GM12878 (cell line): ENCODE measurements at regions of chr17 and their contacts with region 1.

Region 1: DNA sequence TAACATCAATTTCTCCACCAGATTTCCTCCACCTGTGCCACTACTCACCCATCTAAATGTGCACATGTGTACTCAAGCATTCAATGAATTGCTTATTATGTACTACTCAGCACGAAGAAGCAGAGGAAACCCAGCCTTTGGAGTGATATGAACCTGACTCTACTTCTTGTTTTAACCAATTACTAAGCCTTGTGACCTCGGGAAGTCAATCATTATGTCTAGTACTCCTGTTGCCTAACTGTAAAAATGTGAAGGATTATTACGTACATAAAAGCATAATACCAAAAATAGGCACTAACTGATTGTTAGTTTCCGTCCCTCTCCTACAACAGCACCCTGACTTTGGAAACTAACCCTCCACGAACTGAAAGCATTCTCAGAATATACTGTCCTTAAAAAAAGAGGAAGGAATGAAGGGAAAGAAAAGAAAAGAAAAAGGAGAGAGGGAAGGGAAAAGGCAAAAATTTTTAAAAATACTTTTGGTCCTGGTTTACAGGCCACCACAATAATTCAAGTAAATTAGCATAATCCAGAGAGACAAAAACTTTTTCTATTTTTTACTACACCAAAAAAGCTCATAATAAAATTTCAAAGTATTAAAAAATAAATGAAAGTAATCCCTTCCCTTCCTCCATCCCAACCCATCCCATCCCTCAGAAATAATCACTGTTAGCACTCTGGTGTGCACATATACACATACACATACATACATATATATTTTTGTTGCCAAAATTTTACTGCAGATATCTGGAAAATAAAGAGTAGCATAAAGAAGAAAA is 53.6 kb downstream of the KANSL1 start:
- DNase-seq: no peak
- ATAC-seq: peak; percentile 45
- H3K4me3 ChIP-seq: peak overlapping the region; percentile 41
- H3K27ac ChIP-seq: peak overlapping the region; percentile 36
- H3K4me1 ChIP-seq: peaks cover 81% of the 10 kb centered on the region
- H3K27me3 ChIP-seq: no peaks in the 10 kb centered on the region
- CTCF ChIP-seq: no peak
- EP300 ChIP-seq: no peak
- POLR2A ChIP-seq: no peak
- RAD21 ChIP-seq: no peak

Region 2: DNA sequence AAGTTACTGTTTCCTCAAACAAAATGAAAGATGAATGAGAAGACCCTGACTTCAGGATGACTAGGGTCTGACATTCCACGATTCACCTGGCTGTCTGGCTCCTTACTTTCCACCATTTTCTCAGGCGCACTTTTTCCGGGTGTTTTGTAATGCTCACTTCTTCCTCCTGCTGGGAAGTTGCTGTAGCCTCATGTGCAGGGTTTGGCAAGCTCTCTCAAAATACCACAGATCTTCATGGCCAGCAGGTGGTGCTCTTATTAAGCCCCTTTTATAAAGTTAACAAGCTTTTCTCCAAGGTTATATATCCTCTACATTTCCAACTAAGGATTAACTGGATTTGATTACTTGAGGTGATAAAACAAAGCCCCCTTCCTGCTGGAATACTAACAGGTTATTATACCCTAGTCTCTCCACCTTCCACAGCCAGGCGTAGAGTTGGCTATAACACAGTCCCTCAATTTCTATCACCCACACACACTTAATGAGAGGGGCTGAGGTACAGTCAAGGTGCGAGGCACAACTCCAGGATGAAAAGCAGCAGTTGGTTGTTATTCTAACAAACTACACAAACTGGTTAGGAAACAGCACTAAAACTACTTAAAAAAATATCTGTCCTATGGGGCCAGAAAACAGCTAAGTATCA is 95.2 kb before region 1 on chr17:
- CTCF ChIA-PET with region 1: interaction called, 18 read pairs
- POLR2A ChIA-PET with region 1: no interaction called
- RAD21 ChIA-PET with region 1: no interaction called
- SMC1A ChIA-PET with region 1: interaction called, 13 read pairs
- in situ Hi-C with region 1: no loop called
- intact Hi-C with region 1: no loop called
- DNase-seq: no peak
- ATAC-seq: peak; percentile 76
- H3K4me3 ChIP-seq: no peak overlapping the region
- H3K27ac ChIP-seq: no peak overlapping the region
- H3K4me1 ChIP-seq: no peaks in the 10 kb centered on the region
- H3K27me3 ChIP-seq: no peaks in the 10 kb centered on the region
- CTCF ChIP-seq: peak; percentile 67 to 80 (median 76)
- EP300 ChIP-seq: no peak
- POLR2A ChIP-seq: no peak
- RAD21 ChIP-seq: peak; percentile 75

Region 3: DNA sequence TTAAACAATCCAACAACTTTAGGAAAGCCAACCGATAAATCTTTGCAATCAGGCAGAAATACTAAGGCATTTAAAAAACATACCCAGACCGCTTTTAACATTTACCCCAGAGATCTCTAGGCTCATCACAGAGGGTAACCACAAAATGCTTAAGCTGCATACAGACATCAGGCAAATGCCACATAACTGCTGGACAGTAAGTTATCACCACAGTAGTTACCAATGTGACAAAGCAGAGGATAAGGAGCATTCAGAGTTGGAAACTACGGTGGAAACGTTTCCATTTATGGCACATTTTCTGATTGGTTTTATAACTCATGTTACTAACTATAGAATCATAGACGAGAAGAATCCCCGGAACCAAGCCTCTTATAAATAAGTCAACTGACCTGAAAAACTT is 23.9 kb before region 1 on chr17:
- CTCF ChIA-PET with region 1: interaction called, 15 read pairs
- POLR2A ChIA-PET with region 1: interaction called, 23 read pairs
- RAD21 ChIA-PET with region 1: interaction called, 33 read pairs
- SMC1A ChIA-PET with region 1: interaction called, 109 read pairs
- in situ Hi-C with region 1: no loop called
- intact Hi-C with region 1: no loop called
- DNase-seq: no peak
- ATAC-seq: no peak
- H3K4me3 ChIP-seq: no peak overlapping the region
- H3K27ac ChIP-seq: no peak overlapping the region
- H3K4me1 ChIP-seq: peaks cover 17% of the 10 kb centered on the region
- H3K27me3 ChIP-seq: no peaks in the 10 kb centered on the region
- CTCF ChIP-seq: no peak
- EP300 ChIP-seq: no peak
- POLR2A ChIP-seq: no peak
- RAD21 ChIP-seq: no peak

Region 4: GRCh38 chr17:46128453-46128852 is 11.2 kb before region 1 on chr17:
- CTCF ChIA-PET with region 1: interaction called, 9 read pairs
- POLR2A ChIA-PET with region 1: interaction called, 14 read pairs
- RAD21 ChIA-PET with region 1: interaction called, 16 read pairs
- SMC1A ChIA-PET with region 1: interaction called, 109 read pairs
- in situ Hi-C with region 1: no loop called
- intact Hi-C with region 1: no loop called
- DNase-seq: no peak
- ATAC-seq: no peak
- H3K4me3 ChIP-seq: no peak overlapping the region
- H3K27ac ChIP-seq: no peak overlapping the region
- H3K4me1 ChIP-seq: peaks cover 18% of the 10 kb centered on the region
- H3K27me3 ChIP-seq: no peaks in the 10 kb centered on the region
- CTCF ChIP-seq: no peak
- EP300 ChIP-seq: no peak
- POLR2A ChIP-seq: no peak
- RAD21 ChIP-seq: no peak

Region 5: DNA sequence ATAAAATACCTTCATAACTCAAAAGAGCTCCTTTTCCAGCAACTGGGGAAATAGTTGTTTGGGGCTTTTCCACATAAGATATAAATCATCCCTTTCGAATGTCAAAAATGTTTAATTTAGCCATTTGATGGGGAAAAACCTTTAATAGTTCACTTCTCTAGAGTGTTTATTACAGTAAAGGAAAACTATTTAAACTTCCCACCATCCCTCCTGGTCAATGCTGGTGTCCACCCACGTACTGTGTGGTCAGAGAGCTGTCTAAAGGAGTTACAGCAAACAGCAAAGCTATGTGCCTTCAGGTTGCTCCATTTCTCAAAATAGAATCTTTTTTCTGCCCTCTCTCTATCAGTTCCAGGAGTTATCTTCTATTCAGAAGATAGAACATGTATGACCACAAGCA is 20.1 kb after region 1 on chr17:
- CTCF ChIA-PET with region 1: interaction called, 64 read pairs
- POLR2A ChIA-PET with region 1: interaction called, 124 read pairs
- RAD21 ChIA-PET with region 1: interaction called, 130 read pairs
- SMC1A ChIA-PET with region 1: interaction called, 115 read pairs
- in situ Hi-C with region 1: no loop called
- intact Hi-C with region 1: loop called (anchors 2 kb)
- DNase-seq: no peak
- ATAC-seq: no peak
- H3K4me3 ChIP-seq: no peak overlapping the region
- H3K27ac ChIP-seq: no peak overlapping the region
- H3K4me1 ChIP-seq: peaks cover 59% of the 10 kb centered on the region
- H3K27me3 ChIP-seq: no peaks in the 10 kb centered on the region
- CTCF ChIP-seq: no peak
- EP300 ChIP-seq: no peak
- POLR2A ChIP-seq: no peak
- RAD21 ChIP-seq: no peak

Region 6: DNA sequence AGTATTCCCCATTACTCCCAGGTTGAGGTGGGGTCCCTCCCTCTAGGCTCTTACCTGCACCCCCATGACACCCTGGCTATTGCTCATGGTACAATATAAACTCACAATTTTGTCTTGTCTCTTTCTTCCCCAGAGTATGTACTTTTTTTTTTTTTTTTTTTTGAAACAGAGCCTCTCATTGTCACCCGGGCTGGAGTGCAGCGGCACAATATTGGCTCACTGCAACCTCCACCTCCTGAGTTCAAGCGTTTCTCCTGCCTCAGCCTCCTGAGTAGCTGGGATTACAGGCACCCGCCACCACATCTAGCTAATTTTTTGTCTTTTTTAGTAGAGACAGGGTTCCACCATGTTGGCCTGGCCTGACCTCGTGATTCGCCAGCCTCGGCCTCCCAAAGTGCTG is 45.1 kb after region 1 on chr17:
- CTCF ChIA-PET with region 1: interaction called, 110 read pairs
- POLR2A ChIA-PET with region 1: interaction called, 11 read pairs
- RAD21 ChIA-PET with region 1: interaction called, 100 read pairs
- SMC1A ChIA-PET with region 1: interaction called, 207 read pairs
- in situ Hi-C with region 1: no loop called
- intact Hi-C with region 1: no loop called
- DNase-seq: no peak
- ATAC-seq: no peak
- H3K4me3 ChIP-seq: no peak overlapping the region
- H3K27ac ChIP-seq: no peak overlapping the region
- H3K4me1 ChIP-seq: peaks cover 37% of the 10 kb centered on the region
- H3K27me3 ChIP-seq: no peaks in the 10 kb centered on the region
- CTCF ChIP-seq: no peak
- EP300 ChIP-seq: no peak
- POLR2A ChIP-seq: no peak
- RAD21 ChIP-seq: no peak

Region 7: GRCh38 chr17:46266656-46267544 is 127.3 kb after region 1 on chr17:
- CTCF ChIA-PET with region 1: no interaction called
- POLR2A ChIA-PET with region 1: no interaction called
- RAD21 ChIA-PET with region 1: no interaction called
- SMC1A ChIA-PET with region 1: no interaction called
- in situ Hi-C with region 1: no loop called
- intact Hi-C with region 1: no loop called
- DNase-seq: peak; percentile 37
- ATAC-seq: peak; percentile 95
- H3K4me3 ChIP-seq: peak overlapping the region; percentile 77
- H3K27ac ChIP-seq: peak overlapping the region; percentile 20
- H3K4me1 ChIP-seq: peaks cover 13% of the 10 kb centered on the region
- H3K27me3 ChIP-seq: no peaks in the 10 kb centered on the region; a peak in 2 of 4 replicates
- CTCF ChIP-seq: no peak
- EP300 ChIP-seq: no peak
- POLR2A ChIP-seq: peak; percentile 90
- RAD21 ChIP-seq: no peak